Activated naive CD4-positive, alpha-beta T cell treated with anti-CD3 and anti-CD28 coated beads, Interleukin-2, amount 10 ng/mL, durations not matched to agents 7 days and 5 days (primary cell): ENCODE measurements at regions of chr11 and their contacts with region 1.

Region 1: DNA sequence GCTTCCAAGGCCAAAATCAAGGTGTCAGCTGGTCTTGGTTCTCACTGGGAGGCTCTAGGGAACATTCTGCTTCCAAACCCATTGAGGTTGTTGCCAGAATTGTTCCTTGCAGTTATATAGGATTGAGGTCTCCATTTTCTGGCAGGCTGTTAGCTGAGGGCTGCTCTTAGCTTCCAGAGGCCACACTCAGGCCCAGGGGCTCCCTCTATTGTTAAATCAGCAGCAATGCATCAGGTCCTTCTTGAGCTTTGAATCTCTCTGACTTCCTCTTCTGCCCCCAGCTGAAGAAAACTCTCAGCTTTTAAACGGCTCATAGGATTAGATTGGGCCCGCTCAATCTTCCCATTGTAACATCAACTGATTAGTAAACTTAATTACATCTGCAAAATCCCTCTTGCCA is 39.3 kb upstream of the BSX start:
- DNase-seq: peak; percentile 37
- H3K4me3 Mint-ChIP-seq: no peak overlapping the region
- H3K27ac Mint-ChIP-seq: no peak overlapping the region
- H3K4me1 Mint-ChIP-seq: peaks cover 8% of the 10 kb centered on the region
- H3K27me3 Mint-ChIP-seq: peaks cover 40% of the 10 kb centered on the region

Region 2: GRCh38 chr11:122796128-122796717 is 224.7 kb before region 1 on chr11:
- CTCF ChIA-PET with region 1: interaction called, 13 read pairs
- DNase-seq: peak; percentile 79
- H3K4me3 Mint-ChIP-seq: no peak overlapping the region
- H3K27ac Mint-ChIP-seq: no peak overlapping the region
- H3K4me1 Mint-ChIP-seq: no peaks in the 10 kb centered on the region
- H3K27me3 Mint-ChIP-seq: no peaks in the 10 kb centered on the region

Region 3: GRCh38 chr11:122863704-122864326 is 157.2 kb before region 1 on chr11:
- CTCF ChIA-PET with region 1: interaction called, 129 read pairs
- DNase-seq: peak; percentile 59
- H3K4me3 Mint-ChIP-seq: no peak overlapping the region
- H3K27ac Mint-ChIP-seq: no peak overlapping the region
- H3K4me1 Mint-ChIP-seq: no peaks in the 10 kb centered on the region
- H3K27me3 Mint-ChIP-seq: peaks cover 27% of the 10 kb centered on the region

Region 4: DNA sequence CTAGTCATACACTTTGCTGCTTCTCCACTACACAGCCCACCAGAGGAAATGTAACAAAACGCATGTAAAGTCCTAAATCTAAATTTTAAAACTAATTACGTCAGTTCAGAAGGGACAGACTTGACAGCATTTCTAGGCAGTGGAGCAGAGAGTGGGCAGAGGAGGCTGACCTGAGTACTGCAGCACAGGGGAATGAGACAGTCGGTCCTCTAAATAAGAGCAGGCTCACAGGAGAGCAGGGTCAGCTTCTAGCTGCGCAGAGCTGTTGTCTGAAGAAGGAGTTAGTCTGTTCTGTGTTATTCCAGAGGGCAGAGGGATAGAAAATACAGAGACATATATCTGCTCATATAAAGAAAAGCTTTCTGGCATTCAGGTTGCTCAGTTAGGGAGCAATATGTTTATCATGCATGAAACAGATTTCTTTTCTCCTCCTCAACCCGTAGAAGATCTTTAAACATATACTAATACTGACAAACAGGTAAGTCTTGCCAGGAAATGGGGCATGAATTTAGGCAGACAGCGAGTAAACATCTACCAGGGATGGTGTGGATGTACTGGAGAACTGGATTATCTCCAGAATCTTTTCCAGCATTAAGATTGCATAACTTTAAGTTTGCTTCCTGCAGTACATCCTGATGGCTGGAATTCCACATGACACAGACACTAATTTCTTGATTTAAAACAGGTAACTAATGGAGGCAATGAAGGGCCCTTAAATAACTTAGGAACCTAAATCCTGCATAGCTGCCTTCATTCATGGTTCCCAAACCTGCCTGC is 97.9 kb before region 1 on chr11:
- CTCF ChIA-PET with region 1: no interaction called
- DNase-seq: no peak
- H3K4me3 Mint-ChIP-seq: no peak overlapping the region
- H3K27ac Mint-ChIP-seq: no peak overlapping the region
- H3K4me1 Mint-ChIP-seq: no peaks in the 10 kb centered on the region
- H3K27me3 Mint-ChIP-seq: no peaks in the 10 kb centered on the region

Region 5: GRCh38 chr11:123033895-123034294 is 12.9 kb after region 1 on chr11:
- CTCF ChIA-PET with region 1: interaction called, 18 read pairs
- DNase-seq: no peak
- H3K4me3 Mint-ChIP-seq: no peak overlapping the region
- H3K27ac Mint-ChIP-seq: no peak overlapping the region
- H3K4me1 Mint-ChIP-seq: no peaks in the 10 kb centered on the region
- H3K27me3 Mint-ChIP-seq: no peaks in the 10 kb centered on the region

Region 6: GRCh38 chr11:123046473-123047259 is 25.7 kb after region 1 on chr11:
- CTCF ChIA-PET with region 1: interaction called, 12 read pairs
- DNase-seq: no peak
- H3K4me3 Mint-ChIP-seq: no peak overlapping the region
- H3K27ac Mint-ChIP-seq: no peak overlapping the region
- H3K4me1 Mint-ChIP-seq: no peaks in the 10 kb centered on the region
- H3K27me3 Mint-ChIP-seq: peaks cover 4% of the 10 kb centered on the region